Heart left ventricle (tissue), 16 donors: ENCODE measurements at regions of chr1 and their contacts with region 1.

Region 1: DNA sequence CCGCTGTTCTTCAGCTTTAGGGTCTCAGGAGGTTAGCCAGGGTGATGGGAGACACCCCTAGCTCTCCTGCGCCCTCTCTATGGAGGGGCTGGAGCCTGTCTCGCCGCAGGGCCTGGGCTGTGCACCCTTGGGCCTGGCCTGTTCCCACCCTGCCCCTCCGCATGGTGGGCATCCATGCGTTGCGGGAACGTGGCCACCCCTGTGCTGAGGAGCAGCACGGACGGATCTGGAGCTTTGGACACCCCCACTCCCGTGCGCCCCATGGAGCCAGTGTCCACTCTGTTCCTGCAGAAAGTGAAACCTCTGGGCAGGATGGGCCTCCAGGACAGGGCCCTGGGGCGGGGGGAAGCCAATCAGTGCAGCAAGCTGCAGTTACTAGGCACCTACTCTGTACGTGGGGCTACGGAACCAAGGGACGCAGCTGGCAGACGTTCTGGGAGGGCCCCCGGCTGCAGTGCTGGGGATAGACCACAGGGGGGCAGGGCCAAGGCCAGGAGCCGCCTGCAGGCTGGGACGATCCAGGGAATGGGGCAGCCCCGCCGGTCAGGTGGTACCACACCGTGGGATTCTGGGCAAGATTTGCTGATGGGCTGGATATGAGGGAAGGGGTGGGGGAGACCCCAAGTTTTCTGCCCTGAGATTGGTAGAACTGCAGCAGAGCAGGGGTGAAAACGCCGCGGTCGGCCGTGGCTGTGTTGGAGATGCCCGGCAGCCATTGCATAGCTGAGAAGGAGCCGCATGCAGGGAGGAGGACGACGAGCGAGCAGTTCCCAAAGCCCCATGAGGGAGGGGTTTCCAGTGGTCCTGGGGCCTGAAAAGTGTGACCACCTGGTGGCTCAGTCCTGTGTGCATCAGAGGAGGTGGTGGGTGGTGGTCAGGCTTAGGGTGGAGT is 43.3 kb downstream of the TP73 start:
- DNase-seq: peak; percentile 40 to 82 (median 53)
- ATAC-seq: peak; percentile 50 to 92 (median 77)
- H3K4me3 ChIP-seq: peak overlapping the region in 2 of 12 donors; percentile 12 to 22
- H3K27ac ChIP-seq: no peak overlapping the region
- H3K4me1 ChIP-seq: peaks cover 0 to 5% (median 0%) of the 10 kb centered on the region in 12 donors
- H3K27me3 ChIP-seq: peaks cover 0 to 41% (median 4%) of the 10 kb centered on the region in 9 donors
- CTCF ChIP-seq: peak; percentile 66 to 90 (median 78)
- POLR2A ChIP-seq: no peak

Region 2: GRCh38 chr1:3721955-3722465 is 26.4 kb after region 1 on chr1:
- intact Hi-C with region 1: loop called in 7 of 10 experiments (anchors 1 to 2 kb)
- DNase-seq: no peak
- ATAC-seq: no peak
- H3K4me3 ChIP-seq: no peak overlapping the region
- H3K27ac ChIP-seq: no peak overlapping the region
- H3K4me1 ChIP-seq: peaks cover 0 to 31% (median 3%) of the 10 kb centered on the region in 12 donors
- H3K27me3 ChIP-seq: peaks cover 0 to 16% (median 0%) of the 10 kb centered on the region in 9 donors
- CTCF ChIP-seq: no peak
- POLR2A ChIP-seq: no peak

Region 3: GRCh38 chr1:3740042-3740441 is 44.5 kb after region 1 on chr1:
- intact Hi-C with region 1: no loop called
- DNase-seq: peak in 2 of 5 donors; percentile 42 to 44
- ATAC-seq: peak in 1 of 4 donors; percentile 32
- H3K4me3 ChIP-seq: no peak overlapping the region
- H3K27ac ChIP-seq: no peak overlapping the region
- H3K4me1 ChIP-seq: peaks cover 0 to 9% (median 0%) of the 10 kb centered on the region in 12 donors
- H3K27me3 ChIP-seq: no peaks in the 10 kb centered on the region
- CTCF ChIP-seq: no peak
- POLR2A ChIP-seq: no peak

Region 4: DNA sequence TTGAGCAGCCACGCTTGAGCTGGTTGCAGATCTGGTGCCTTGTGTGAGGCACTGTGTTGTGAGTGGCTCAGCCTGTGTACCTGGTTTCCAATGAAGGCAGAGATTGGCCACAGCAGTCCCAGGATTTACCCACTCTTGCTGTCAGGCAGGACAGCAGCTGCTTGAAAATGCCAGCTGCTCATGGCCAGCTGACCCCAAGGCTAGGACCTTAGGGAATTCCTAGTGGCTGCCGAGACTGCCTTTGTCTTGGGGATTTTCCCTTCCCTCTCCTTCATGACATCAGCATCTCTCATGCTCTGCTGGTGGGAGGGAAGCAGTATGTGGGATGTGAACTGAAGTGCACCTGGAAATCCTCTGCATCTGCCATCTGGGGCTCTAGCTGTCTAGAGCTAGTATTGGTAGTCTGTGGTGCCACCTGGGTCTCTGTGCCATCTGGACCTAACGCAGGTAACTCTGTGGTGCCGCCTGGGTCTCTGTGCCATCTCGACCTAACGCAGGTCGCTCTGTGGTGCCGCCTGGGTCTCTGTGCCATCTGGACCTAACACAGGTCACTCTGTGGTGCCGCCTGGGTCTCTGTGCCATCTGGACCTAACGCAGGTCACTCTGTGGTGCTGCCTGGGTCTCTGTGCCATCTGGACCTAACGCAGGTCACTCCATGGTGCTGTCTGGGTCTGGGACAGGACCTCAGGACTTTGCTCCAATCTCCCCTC is 104.6 kb after region 1 on chr1:
- intact Hi-C with region 1: loop called in 1 of 10 experiments (anchors 5 kb)
- DNase-seq: no peak
- ATAC-seq: no peak
- H3K4me3 ChIP-seq: no peak overlapping the region
- H3K27ac ChIP-seq: no peak overlapping the region
- H3K4me1 ChIP-seq: peaks cover 3 to 13% (median 8%) of the 10 kb centered on the region in 12 donors
- H3K27me3 ChIP-seq: peaks cover 0 to 20% (median 0%) of the 10 kb centered on the region in 9 donors
- CTCF ChIP-seq: no peak
- POLR2A ChIP-seq: no peak